Sigmoid colon (tissue), 7 donors: ENCODE measurements at regions of chr16 and their contacts with region 1.

Region 1: GRCh38 chr16:57084257-57084770 is 8.1 kb upstream of the CPNE2 start:
- DNase-seq: peak; percentile 85
- H3K4me3 ChIP-seq: no peak overlapping the region
- H3K27ac ChIP-seq: no peak overlapping the region
- H3K4me1 ChIP-seq: peaks cover 0 to 8% (median 2%) of the 10 kb centered on the region in 4 donors
- H3K27me3 ChIP-seq: no peaks in the 10 kb centered on the region
- CTCF ChIP-seq: peak; percentile 91 to 98 (median 97)
- EP300 ChIP-seq: no peak
- POLR2A ChIP-seq: no peak

Region 2: GRCh38 chr16:57013229-57013628 is 71.1 kb before region 1 on chr16:
- intact Hi-C with region 1: no loop called
- DNase-seq: no peak
- H3K4me3 ChIP-seq: no peak overlapping the region
- H3K27ac ChIP-seq: no peak overlapping the region
- H3K4me1 ChIP-seq: no peaks in the 10 kb centered on the region
- H3K27me3 ChIP-seq: no peaks in the 10 kb centered on the region
- CTCF ChIP-seq: no peak
- EP300 ChIP-seq: no peak
- POLR2A ChIP-seq: no peak

Region 3: DNA sequence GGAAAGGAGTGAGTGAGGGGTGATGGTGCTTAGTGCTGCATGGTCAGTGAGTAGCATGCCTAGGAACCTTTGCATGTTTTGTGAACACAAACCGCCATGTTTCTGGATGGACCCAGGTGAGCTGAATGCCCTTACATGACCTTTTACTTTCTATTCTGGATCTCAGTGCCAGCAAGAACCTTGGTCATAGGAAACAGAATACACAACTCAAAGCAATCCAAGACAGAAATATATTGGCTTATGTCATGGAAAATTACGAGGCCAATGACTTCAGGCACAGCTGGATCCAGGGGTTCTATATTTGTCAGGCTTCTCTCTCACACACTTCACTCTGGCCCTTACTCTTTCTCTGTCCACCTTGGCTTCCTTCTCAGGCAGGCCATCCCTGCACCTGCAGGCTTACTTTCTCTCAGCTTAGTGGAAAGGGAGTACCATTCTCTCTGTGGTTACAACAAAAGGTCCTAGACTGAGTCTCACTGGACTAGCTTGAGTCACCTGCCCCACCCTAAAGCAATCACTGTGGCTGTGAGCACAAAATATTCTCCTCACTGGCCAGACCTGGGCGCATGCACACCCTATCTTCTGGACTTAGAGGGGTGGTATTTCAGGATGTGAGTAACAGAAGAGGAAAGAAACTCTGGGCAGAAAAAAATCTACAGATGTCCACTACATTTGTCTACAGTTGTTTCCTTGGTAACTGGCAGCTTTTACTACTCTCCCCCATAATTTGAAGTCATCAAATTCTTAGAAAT is 12.3 kb before region 1 on chr16:
- intact Hi-C with region 1: no loop called
- DNase-seq: no peak
- H3K4me3 ChIP-seq: no peak overlapping the region
- H3K27ac ChIP-seq: no peak overlapping the region
- H3K4me1 ChIP-seq: no peaks in the 10 kb centered on the region
- H3K27me3 ChIP-seq: no peaks in the 10 kb centered on the region
- CTCF ChIP-seq: no peak
- EP300 ChIP-seq: no peak
- POLR2A ChIP-seq: no peak

Region 4: DNA sequence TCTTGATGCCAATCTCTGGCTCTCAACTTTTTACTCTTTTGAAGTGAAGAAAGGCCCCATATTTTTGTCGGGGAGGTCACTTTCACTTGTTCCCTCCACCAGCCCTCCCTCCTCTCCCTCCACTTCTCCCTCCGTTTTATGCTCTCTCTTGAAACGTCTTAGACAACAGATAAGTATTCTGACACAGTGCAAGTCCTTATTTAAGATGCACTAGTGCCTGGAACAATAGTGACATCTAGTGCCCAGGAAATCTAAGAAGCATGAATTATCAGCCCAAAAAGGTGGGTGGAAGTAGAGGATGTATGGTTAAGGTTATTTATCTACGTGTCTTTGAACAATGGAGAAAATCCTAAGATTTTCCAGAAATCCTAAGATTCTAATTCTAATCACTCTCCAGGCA is 83.6 kb after region 1 on chr16:
- intact Hi-C with region 1: loop called (anchors 1 kb)
- DNase-seq: peak; percentile 33
- H3K4me3 ChIP-seq: no peak overlapping the region
- H3K27ac ChIP-seq: no peak overlapping the region
- H3K4me1 ChIP-seq: peaks cover 0 to 9% (median 3%) of the 10 kb centered on the region in 4 donors
- H3K27me3 ChIP-seq: no peaks in the 10 kb centered on the region
- CTCF ChIP-seq: peak in 2 of 4 experiments; percentile 40 to 45
- EP300 ChIP-seq: no peak
- POLR2A ChIP-seq: no peak

Region 5: GRCh38 chr16:57416122-57416509 is 331.8 kb after region 1 on chr16:
- intact Hi-C with region 1: loop called (anchors 5 kb)
- DNase-seq: peak; percentile 65
- H3K4me3 ChIP-seq: no peak overlapping the region
- H3K27ac ChIP-seq: no peak overlapping the region
- H3K4me1 ChIP-seq: peaks cover 0 to 28% (median 20%) of the 10 kb centered on the region in 4 donors
- H3K27me3 ChIP-seq: no peaks in the 10 kb centered on the region
- CTCF ChIP-seq: no peak
- EP300 ChIP-seq: no peak
- POLR2A ChIP-seq: no peak